CD8-positive, alpha-beta T cell (primary cell): ENCODE measurements at regions of chr19 and their contacts with region 1.

Region 1: DNA sequence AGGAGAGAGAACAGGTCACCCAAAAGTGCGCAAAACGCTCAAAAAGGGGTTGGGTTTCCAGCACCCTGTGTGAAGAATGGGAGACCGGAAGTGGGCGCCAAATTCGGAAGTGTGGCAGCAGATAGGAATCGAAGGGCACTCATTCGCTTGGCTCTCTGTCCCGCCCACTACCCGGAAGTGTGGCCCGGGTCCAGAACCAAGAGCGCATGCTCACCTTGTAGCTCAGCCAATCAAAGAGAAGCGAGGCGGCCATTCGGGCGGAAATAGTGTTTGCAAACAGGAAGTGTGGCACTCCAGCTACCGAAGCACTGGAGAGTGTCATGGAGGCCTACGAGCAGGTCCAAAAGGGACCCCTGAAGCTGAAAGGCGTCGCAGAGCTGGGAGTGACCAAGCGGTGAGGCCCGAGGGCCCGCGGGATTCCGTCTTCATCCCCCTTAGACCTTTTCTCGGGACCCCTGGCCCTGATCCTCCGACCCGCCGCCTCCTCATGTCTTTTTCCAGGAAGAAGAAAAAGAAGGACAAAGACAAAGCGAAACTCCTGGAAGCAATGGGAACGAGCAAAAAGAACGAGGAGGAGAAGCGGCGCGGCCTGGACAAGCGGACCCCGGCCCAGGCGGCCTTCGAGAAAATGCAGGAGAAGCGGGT is at the start of gene FAM32A:
- DNase-seq: peak; percentile 98 to 99 (median 98)
- ATAC-seq: peak; percentile 94
- H3K4me3 ChIP-seq: peak within 1 kb of the TSS; percentile 90 to 95
- H3K4me3 Mint-ChIP-seq: peak within 1 kb of the TSS; percentile 99
- H3K27ac ChIP-seq: peak within 1 kb of the TSS; percentile 81 to 87
- H3K27ac Mint-ChIP-seq: peak within 1 kb of the TSS; percentile 95
- H3K4me1 ChIP-seq: peaks cover 19% of the 10 kb centered on the region
- H3K4me1 Mint-ChIP-seq: peaks cover 38% of the 10 kb centered on the region
- H3K27me3 ChIP-seq: no peaks in the 10 kb centered on the region
- H3K27me3 Mint-ChIP-seq: peaks cover 4% of the 10 kb centered on the region
- CTCF ChIP-seq: no peak
- total RNA-seq, gene FAM32A: 59.7 to 60.4 TPM

Region 2: DNA sequence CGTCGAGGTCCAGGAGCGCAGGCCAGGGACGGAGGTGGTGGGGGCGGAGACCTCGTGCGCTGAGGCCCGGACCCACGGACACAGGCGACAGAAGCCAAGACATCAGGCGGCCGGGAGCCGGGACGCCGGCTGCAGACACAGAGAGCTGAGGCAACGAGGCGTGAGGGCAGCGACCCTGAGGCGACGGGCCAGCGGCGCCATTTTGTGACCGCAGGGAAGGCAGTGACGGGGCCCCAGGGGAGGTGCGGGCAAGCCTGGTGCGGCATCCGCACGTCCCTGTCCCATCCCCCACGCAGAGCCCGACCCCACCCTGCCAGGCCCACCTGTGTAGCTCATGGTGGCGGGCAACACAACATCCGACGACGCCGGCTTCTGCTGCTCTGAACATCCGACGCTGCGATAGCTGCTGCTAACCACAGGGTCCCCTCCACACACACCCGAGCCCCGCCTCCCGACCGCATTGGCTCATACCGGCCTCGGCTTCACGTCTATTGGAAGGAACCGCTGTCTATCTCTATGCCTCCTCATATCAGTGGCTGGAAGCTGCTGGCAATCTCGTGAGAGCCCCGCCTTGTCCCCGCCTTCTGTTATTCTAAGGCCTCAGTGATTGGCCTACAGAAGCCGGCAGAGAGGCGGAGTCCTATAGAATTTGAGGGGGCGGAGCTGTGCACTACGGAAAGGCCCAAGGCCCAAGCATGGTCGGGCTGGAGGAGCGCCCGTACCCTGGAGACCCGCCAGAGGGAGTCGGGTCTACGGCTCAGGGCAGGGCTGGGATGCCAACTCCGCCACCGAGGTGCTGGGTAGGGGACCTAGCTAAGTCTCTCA is 766.4 kb before region 1 on chr19 and contains the start of gene AKAP8L:
- CTCF ChIA-PET with region 1: no interaction called
- POLR2A ChIA-PET with region 1: no interaction called
- intact Hi-C with region 1: loop called in 1 of 2 experiments (anchors 5 kb)
- DNase-seq: peak; percentile 97 to 100 (median 98)
- ATAC-seq: peak; percentile 89
- H3K4me3 ChIP-seq: peak within 1 kb of the TSS; percentile 86 to 94
- H3K4me3 Mint-ChIP-seq: peak within 1 kb of the TSS; percentile 97
- H3K27ac ChIP-seq: peak within 1 kb of the TSS; percentile 77 to 93
- H3K27ac Mint-ChIP-seq: peak within 1 kb of the TSS; percentile 98
- H3K4me1 ChIP-seq: peaks cover 29% of the 10 kb centered on the region
- H3K4me1 Mint-ChIP-seq: peaks cover 46% of the 10 kb centered on the region
- H3K27me3 ChIP-seq: no peaks in the 10 kb centered on the region
- H3K27me3 Mint-ChIP-seq: no peaks in the 10 kb centered on the region
- CTCF ChIP-seq: peak; percentile 72
- total RNA-seq, gene AKAP8L: 174 to 199 TPM

Region 3: GRCh38 chr19:15831626-15832025 is 353.6 kb before region 1 on chr19:
- CTCF ChIA-PET with region 1: no interaction called
- POLR2A ChIA-PET with region 1: interaction called, 3 read pairs
- intact Hi-C with region 1: loop called (anchors 2 to 5 kb)
- DNase-seq: no peak
- ATAC-seq: no peak
- H3K4me3 ChIP-seq: no peak overlapping the region
- H3K4me3 Mint-ChIP-seq: no peak overlapping the region
- H3K27ac ChIP-seq: no peak overlapping the region
- H3K27ac Mint-ChIP-seq: no peak overlapping the region
- H3K4me1 ChIP-seq: peaks cover 11% of the 10 kb centered on the region
- H3K4me1 Mint-ChIP-seq: peaks cover 14% of the 10 kb centered on the region
- H3K27me3 ChIP-seq: no peaks in the 10 kb centered on the region
- H3K27me3 Mint-ChIP-seq: no peaks in the 10 kb centered on the region
- CTCF ChIP-seq: no peak

Region 4: DNA sequence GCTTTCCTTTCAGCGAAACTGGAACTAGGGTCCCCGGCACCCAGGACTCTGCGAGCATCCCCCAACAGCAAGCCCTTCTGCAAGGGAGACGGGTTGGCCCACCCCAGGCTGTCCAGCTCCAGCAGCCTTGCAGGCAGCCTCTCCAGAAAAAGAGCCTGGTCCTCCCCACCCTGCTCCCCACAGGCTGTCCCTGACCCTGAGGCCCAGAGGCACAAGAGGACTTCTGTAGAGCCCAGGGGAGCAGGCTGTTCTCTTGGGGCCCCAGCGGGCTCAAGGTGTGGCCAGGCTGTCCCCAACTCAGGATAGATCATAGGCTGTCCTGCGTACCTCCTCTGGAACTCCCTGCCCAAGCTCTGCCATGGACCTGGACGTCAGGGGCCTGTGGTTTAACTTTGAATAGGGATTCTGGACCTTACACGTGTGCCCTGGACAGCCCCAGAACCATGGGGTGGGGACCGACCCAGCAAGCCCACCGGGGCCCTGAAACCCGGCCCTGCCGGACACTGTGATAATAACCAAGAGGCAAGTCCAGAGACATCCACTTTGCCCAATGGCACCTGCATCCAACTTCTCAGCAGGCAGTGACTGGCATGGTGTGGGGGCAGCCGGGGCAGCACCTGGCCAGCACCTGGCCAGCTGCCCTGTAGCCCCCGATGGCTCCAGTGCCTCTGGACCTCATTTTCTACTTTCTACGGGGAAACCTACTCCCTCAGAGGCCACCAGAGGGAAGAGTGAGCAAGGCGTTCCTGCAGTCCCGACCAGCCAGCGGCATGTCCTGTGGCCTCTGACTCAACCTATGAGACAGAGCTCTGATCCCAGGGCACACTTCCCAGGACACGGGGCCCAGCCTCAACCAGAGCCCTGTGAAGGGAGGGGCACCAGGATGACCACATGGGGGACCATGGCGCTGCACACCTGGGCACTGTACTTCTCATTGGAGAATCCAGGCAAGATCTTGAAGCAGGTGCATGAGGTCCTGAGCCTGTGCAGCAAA is 159.8 kb before region 1 on chr19:
- CTCF ChIA-PET with region 1: no interaction called
- POLR2A ChIA-PET with region 1: no interaction called
- intact Hi-C with region 1: no loop called
- DNase-seq: peak in 2 of 9 experiments; percentile 22 to 24
- ATAC-seq: no peak
- H3K4me3 ChIP-seq: no peak overlapping the region
- H3K4me3 Mint-ChIP-seq: no peak overlapping the region
- H3K27ac ChIP-seq: no peak overlapping the region
- H3K27ac Mint-ChIP-seq: no peak overlapping the region
- H3K4me1 ChIP-seq: no peaks in the 10 kb centered on the region
- H3K4me1 Mint-ChIP-seq: no peaks in the 10 kb centered on the region
- H3K27me3 ChIP-seq: no peaks in the 10 kb centered on the region
- H3K27me3 Mint-ChIP-seq: no peaks in the 10 kb centered on the region
- CTCF ChIP-seq: no peak

Region 5: DNA sequence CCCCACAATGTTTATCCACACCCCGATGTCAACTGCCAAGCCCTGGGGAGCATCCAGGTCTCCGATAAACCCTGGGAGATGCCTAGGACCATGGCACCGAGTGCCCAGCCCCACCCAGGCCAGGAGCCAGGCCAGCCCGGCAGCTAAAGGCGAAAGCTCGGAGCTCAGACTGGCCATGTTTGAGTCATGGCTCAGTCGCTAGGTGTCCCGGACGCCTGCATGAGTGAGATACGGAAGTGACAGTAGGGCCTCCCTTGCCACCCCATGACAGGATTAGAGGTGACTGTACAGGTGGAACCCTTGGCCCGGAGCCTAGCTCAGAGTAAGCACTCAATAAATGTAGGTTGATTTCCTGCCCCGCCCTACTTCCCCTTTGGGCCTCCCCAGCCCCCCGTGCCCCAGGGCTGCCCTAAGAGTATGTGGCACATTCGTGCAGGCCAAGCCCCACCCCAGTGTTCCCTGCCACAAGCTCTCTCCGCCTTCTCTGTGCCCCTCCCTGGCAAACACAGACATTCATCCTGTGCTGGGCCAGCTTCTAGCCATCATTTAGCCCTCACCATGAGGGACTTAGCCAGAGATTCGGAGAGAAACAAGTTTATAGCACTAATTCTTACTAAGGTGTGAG is 114.8 kb before region 1 on chr19:
- CTCF ChIA-PET with region 1: interaction called, 5 read pairs
- POLR2A ChIA-PET with region 1: no interaction called
- intact Hi-C with region 1: loop called (anchors 1 to 5 kb)
- DNase-seq: peak; percentile 67 to 96 (median 88)
- ATAC-seq: peak; percentile 91
- H3K4me3 ChIP-seq: peak overlapping the region; percentile 38 to 47
- H3K4me3 Mint-ChIP-seq: peak overlapping the region; percentile 78
- H3K27ac ChIP-seq: peak overlapping the region; percentile 82 to 97
- H3K27ac Mint-ChIP-seq: no peak overlapping the region
- H3K4me1 ChIP-seq: peaks cover 63% of the 10 kb centered on the region
- H3K4me1 Mint-ChIP-seq: peaks cover 40% of the 10 kb centered on the region
- H3K27me3 ChIP-seq: no peaks in the 10 kb centered on the region
- H3K27me3 Mint-ChIP-seq: no peaks in the 10 kb centered on the region
- CTCF ChIP-seq: peak; percentile 38

Region 6: GRCh38 chr19:16247353-16248182 is 62.3 kb after region 1 on chr19:
- CTCF ChIA-PET with region 1: interaction called, 8 read pairs
- POLR2A ChIA-PET with region 1: interaction called, 5 read pairs
- intact Hi-C with region 1: loop called in 1 of 2 experiments (anchors 5 kb)
- DNase-seq: peak; percentile 70 to 94 (median 84)
- ATAC-seq: peak; percentile 80
- H3K4me3 ChIP-seq: no peak overlapping the region
- H3K4me3 Mint-ChIP-seq: peak overlapping the region; percentile 60
- H3K27ac ChIP-seq: no peak overlapping the region
- H3K27ac Mint-ChIP-seq: peak overlapping the region; percentile 82
- H3K4me1 ChIP-seq: peaks cover 48% of the 10 kb centered on the region
- H3K4me1 Mint-ChIP-seq: peaks cover 32% of the 10 kb centered on the region
- H3K27me3 ChIP-seq: no peaks in the 10 kb centered on the region
- H3K27me3 Mint-ChIP-seq: no peaks in the 10 kb centered on the region
- CTCF ChIP-seq: peak; percentile 95

Region 7: GRCh38 chr19:16338470-16339360 is 153.5 kb after region 1 on chr19:
- CTCF ChIA-PET with region 1: no interaction called
- POLR2A ChIA-PET with region 1: no interaction called
- intact Hi-C with region 1: no loop called
- DNase-seq: peak in 6 of 9 experiments; percentile 55 to 83 (median 62)
- ATAC-seq: peak; percentile 49
- H3K4me3 ChIP-seq: peak overlapping the region; percentile 25 to 38
- H3K4me3 Mint-ChIP-seq: peak overlapping the region; percentile 81
- H3K27ac ChIP-seq: peak overlapping the region; percentile 28 to 76
- H3K27ac Mint-ChIP-seq: peak overlapping the region; percentile 94
- H3K4me1 ChIP-seq: peaks cover 71% of the 10 kb centered on the region
- H3K4me1 Mint-ChIP-seq: peaks cover 61% of the 10 kb centered on the region
- H3K27me3 ChIP-seq: no peaks in the 10 kb centered on the region
- H3K27me3 Mint-ChIP-seq: no peaks in the 10 kb centered on the region
- CTCF ChIP-seq: no peak

Region 8: DNA sequence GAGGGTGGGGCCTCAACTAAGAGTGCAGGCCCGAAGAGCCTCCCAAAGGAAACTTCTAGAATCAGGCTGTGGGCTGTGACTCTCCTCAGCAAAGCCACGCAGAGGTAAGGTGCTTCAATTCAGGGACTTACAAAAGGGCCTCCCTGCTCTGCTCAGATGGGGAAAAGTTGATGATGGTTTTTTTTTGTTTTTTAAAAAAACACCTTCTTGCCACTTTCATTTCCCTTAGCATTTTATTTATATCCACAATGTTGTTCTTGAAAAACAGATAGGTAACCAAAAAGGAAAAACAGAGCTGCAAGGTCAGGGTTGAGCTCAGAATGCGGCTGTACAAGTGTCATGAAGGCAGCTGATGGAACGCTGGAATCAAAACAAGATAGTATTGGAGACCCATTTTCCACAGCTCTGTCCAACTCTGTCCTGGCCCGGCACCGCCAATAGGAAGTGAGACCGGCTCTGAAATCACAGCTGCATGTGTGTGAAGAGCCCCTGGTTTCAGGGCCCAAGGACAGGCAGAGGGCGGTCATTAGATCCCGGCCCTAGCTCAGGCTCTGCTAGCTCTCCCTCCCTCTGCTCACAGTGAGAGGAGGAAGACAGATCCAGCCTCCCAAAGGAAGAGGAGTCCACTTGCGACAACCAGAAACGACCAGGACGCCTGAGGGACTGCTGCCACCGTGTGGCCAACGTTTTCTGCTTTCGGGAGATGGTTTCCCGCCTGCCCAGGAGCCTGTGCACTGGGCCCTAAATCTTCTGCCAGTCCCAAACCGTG is 197.7 kb after region 1 on chr19:
- CTCF ChIA-PET with region 1: interaction called, 14 read pairs
- POLR2A ChIA-PET with region 1: interaction called, 12 read pairs
- intact Hi-C with region 1: loop called in 1 of 2 experiments (anchors 1 kb)
- DNase-seq: peak; percentile 70 to 91 (median 84)
- ATAC-seq: peak; percentile 80
- H3K4me3 ChIP-seq: peak overlapping the region; percentile 40 to 42
- H3K4me3 Mint-ChIP-seq: peak overlapping the region; percentile 54
- H3K27ac ChIP-seq: peak overlapping the region; percentile 66 to 82
- H3K27ac Mint-ChIP-seq: peak overlapping the region; percentile 95
- H3K4me1 ChIP-seq: peaks cover 58% of the 10 kb centered on the region
- H3K4me1 Mint-ChIP-seq: peaks cover 58% of the 10 kb centered on the region
- H3K27me3 ChIP-seq: no peaks in the 10 kb centered on the region
- H3K27me3 Mint-ChIP-seq: no peaks in the 10 kb centered on the region
- CTCF ChIP-seq: peak; percentile 85